HEK293 (cell line): ENCODE measurements at regions of chr17 and their contacts with region 1.

Region 1: GRCh38 chr17:55770148-55770870 is 19.5 kb downstream of the PCTP start:
- H3K4me3 ChIP-seq: no peak overlapping the region
- H3K27ac ChIP-seq: no peak overlapping the region
- H3K4me1 ChIP-seq: no peaks in the 10 kb centered on the region
- CTCF ChIP-seq: no peak

Region 2: DNA sequence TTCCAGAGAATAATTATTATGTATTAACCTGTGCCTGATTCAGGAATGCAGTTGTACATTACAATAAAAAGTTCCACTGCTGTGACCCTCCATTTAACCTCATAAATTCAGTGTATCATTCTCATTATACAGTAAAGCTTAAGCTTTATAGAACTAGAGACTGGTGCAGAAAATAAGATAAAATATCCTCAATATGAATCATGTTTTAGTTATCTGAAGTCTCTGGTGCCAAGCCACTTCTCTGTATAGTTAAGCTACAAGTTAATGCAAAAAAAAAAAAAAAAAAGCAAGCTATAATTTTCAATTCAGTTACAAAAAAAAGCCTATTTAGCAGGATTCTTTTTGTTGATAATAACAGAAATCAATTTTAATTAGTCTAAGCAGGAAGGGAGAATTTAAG is 236.7 kb before region 1 on chr17:
- CTCF ChIA-PET with region 1: interaction called, 171 read pairs
- POLR2A ChIA-PET with region 1: no interaction called
- H3K4me3 ChIP-seq: no peak overlapping the region
- H3K27ac ChIP-seq: no peak overlapping the region
- H3K4me1 ChIP-seq: no peaks in the 10 kb centered on the region
- CTCF ChIP-seq: no peak

Region 3: DNA sequence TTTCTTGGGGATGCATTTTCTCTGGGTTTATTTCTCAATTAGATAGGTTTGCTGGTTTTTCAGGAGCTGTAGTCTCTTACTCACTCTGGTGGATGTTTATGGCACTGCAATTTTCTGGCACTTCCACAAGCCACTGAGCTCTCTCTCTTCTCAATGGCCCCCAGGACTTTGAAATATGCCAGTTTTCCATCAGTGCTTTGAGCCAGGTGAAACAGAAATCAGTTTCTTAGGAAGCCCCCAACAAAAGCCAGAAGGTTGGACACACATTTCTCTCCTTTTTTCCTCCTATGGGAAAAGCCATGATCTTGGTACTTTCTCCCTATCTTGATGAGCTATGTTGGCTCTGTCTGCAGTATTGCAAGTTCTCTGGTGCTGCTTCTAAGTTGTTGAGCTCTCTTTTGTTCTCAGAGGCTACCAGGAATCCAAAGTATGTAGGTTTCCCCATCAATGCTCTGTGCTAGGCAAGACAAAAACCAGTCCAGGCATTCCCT is 168.4 kb before region 1 on chr17:
- CTCF ChIA-PET with region 1: interaction called, 37 read pairs
- POLR2A ChIA-PET with region 1: no interaction called
- H3K4me3 ChIP-seq: no peak overlapping the region
- H3K27ac ChIP-seq: no peak overlapping the region
- H3K4me1 ChIP-seq: no peaks in the 10 kb centered on the region
- CTCF ChIP-seq: no peak

Region 4: DNA sequence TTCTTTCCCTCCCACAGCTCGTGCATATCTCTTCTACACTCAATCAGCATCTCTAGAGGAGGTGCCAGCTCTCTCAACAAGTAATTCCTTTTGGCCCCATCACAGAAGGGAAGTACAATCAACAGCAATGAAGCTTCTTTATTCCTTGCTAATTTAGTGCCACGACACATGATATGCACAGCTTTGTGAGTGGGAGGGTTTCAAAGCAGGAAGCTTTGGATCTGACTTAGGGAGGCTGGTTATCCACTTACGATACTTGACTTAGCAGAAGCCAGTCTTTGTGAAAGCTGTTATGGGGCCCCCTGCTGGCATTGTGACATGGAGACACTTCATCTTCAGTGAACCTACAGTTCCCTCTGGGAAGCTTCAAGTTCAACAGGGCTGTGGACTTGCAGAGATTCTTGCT is 128.6 kb before region 1 on chr17:
- CTCF ChIA-PET with region 1: interaction called, 10 read pairs
- POLR2A ChIA-PET with region 1: no interaction called
- H3K4me3 ChIP-seq: no peak overlapping the region
- H3K27ac ChIP-seq: no peak overlapping the region
- H3K4me1 ChIP-seq: peaks cover 5% of the 10 kb centered on the region; the same call in 1 of the 2 replicates
- CTCF ChIP-seq: no peak

Region 5: DNA sequence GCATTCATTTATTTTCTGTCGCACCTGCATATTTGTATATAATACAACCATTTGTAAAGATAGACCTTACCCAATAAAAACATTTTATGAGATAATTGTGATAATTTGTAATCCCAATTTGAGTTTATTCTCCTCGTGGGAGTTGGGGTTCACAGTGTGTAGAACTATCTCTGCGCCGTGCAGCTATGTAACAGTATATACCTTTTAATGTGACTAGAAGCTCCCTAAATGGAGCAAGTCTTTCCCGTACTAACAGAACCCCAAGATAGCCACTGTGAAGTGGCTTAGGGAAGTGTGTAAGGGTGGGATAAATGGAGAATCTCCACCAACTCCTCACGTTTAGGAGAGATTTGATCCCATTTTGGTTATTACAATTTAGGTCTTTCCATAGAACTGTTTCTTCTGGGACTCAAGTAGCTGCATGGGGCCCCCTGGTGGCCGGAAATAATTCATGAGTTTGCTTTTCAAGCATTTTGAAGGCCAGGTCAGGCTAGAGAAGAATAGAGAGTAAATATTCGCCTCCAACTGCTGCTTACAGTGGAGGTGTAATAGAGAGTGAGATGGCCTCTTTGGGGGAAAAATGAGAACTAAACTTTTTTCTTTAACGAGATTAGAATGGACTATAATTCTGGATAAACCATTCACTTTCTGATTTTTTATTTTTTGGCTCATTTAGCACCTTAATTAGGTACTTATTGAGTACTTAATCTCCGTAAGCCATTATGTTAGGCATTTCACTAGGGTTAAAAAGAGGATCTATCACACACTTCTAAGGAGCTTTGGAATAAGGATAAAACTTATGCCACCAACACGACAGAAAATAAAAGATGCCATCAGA is 52.2 kb before region 1 on chr17:
- CTCF ChIA-PET with region 1: interaction called, 15 read pairs
- POLR2A ChIA-PET with region 1: no interaction called
- H3K4me3 ChIP-seq: no peak overlapping the region
- H3K27ac ChIP-seq: no peak overlapping the region
- H3K4me1 ChIP-seq: peaks cover 20% of the 10 kb centered on the region
- CTCF ChIP-seq: 0 out of 2 replicates have a peak, but pooled peaks have one; percentile 27

Region 6: DNA sequence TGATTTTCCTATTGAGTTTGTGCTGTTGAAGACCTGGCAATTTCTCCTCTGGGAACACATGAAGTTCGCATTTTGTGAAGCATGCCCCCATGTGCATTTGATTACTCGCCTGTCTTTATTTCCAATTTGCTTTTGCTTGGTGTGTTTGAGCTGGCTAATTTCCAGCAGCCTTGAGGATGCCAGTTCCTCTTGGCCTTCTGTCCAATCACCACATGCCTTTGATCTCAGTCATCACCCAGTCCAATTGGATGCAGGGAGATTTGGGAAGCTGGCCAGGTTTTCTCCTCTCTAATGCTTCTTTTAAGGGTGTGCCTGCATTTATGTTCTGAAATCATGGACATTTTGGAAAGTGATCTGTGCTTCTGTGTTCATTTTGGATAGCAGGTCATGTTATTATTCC is 43.9 kb before region 1 on chr17:
- CTCF ChIA-PET with region 1: interaction called, 15 read pairs
- POLR2A ChIA-PET with region 1: no interaction called
- H3K4me3 ChIP-seq: no peak overlapping the region
- H3K27ac ChIP-seq: no peak overlapping the region
- H3K4me1 ChIP-seq: peaks cover 39% of the 10 kb centered on the region
- CTCF ChIP-seq: no peak

Region 7: GRCh38 chr17:55783684-55784245 is 13.5 kb after region 1 on chr17:
- CTCF ChIA-PET with region 1: interaction called, 29 read pairs
- POLR2A ChIA-PET with region 1: no interaction called
- H3K4me3 ChIP-seq: no peak overlapping the region
- H3K27ac ChIP-seq: no peak overlapping the region
- H3K4me1 ChIP-seq: no peaks in the 10 kb centered on the region
- CTCF ChIP-seq: no peak